Panc1 (cell line): ENCODE measurements at regions of chr2 and their contacts with region 1.

Region 1: DNA sequence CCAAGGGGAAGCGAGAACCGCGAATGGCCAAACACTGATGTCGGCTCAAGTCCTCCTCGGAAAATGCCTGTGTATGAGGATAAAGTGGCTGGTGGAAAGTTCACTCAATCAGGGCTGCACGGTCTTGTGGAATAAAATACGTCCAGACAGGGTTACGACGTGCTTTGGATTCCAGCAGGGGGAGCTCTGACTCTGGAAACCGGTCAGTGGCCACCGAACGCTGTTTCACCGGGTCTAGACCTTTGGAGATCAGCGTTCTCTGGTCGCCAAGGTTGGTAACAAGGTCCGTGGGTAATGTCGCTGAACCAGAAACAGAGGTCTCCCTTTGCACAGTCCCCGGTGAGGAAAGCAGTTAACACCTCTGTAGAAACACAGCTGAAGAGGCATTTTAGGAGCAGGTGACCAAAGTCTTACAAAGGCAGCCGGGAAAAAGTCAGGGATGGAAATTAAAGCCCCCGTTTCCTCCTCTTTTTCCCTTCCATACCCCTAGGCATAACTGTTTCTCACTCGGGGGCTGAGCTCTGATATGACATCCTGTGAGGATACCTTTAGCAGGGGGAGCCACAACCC is 47.8 kb downstream of the CDCA7 start:
- DNase-seq: peak; percentile 66
- ATAC-seq: peak; percentile 98
- H3K4me3 ChIP-seq: peak overlapping the region; percentile 28 to 49
- H3K27ac ChIP-seq: peak overlapping the region; percentile 72
- H3K4me1 ChIP-seq: peaks cover 21% of the 10 kb centered on the region; the same call in 1 of the 2 replicates
- H3K27me3 ChIP-seq: no peaks in the 10 kb centered on the region
- CTCF ChIP-seq: peak; percentile 90

Region 2: GRCh38 chr2:173448938-173449471 is 46.5 kb after region 1 on chr2:
- CTCF ChIA-PET with region 1: interaction called, 18 read pairs
- POLR2A ChIA-PET with region 1: no interaction called
- in situ Hi-C with region 1: no loop called
- intact Hi-C with region 1: loop called (anchors 2 kb)
- DNase-seq: peak; percentile 55
- ATAC-seq: peak; percentile 98
- H3K4me3 ChIP-seq: peak overlapping the region; percentile 41 to 64
- H3K27ac ChIP-seq: peak overlapping the region; percentile 89
- H3K4me1 ChIP-seq: no peaks in the 10 kb centered on the region
- H3K27me3 ChIP-seq: no peaks in the 10 kb centered on the region
- CTCF ChIP-seq: peak; percentile 94

Region 3: GRCh38 chr2:173571021-173571882 is 168.8 kb after region 1 on chr2:
- CTCF ChIA-PET with region 1: no interaction called
- POLR2A ChIA-PET with region 1: no interaction called
- in situ Hi-C with region 1: no loop called
- intact Hi-C with region 1: loop called (anchors 1 kb)
- DNase-seq: peak; percentile 30
- ATAC-seq: peak; percentile 89
- H3K4me3 ChIP-seq: peak overlapping the region in 1 of 2 experiments; percentile 36; a peak in 2 of 4 replicates
- H3K27ac ChIP-seq: peak overlapping the region; percentile 74
- H3K4me1 ChIP-seq: peaks cover 13% of the 10 kb centered on the region
- H3K27me3 ChIP-seq: no peaks in the 10 kb centered on the region
- CTCF ChIP-seq: peak; percentile 73

Region 4: DNA sequence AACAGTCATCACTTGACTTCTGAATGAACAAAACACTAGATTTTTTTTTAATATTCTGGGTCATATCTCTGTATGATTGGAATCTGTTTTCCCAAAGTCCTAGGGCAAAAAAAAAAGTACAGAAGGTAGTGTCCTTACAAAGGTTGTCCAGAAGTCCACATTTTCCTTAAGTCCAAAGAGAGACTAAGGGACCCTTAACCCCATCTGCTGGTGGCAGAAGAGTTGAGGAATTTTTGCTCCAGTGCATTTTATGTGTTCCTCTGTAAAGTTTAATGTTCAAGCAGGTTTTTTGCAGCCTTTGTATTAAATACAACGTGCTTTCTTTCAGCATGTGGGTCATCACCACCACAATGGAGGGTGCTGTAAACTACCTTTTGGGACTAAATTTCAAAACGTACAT is 346.8 kb after region 1 on chr2:
- CTCF ChIA-PET with region 1: no interaction called
- POLR2A ChIA-PET with region 1: no interaction called
- in situ Hi-C with region 1: no loop called
- intact Hi-C with region 1: loop called (anchors 5 kb)
- DNase-seq: peak; percentile 15
- ATAC-seq: no peak
- H3K4me3 ChIP-seq: no peak overlapping the region
- H3K27ac ChIP-seq: no peak overlapping the region
- H3K4me1 ChIP-seq: peaks cover 4% of the 10 kb centered on the region; the same call in 1 of the 2 replicates
- H3K27me3 ChIP-seq: no peaks in the 10 kb centered on the region
- CTCF ChIP-seq: peak; percentile 53; the same call in 1 of the 2 replicates

Region 5: GRCh38 chr2:174341286-174341994 is 939.0 kb after region 1 on chr2:
- CTCF ChIA-PET with region 1: interaction called, 7 read pairs
- POLR2A ChIA-PET with region 1: no interaction called
- in situ Hi-C with region 1: no loop called
- intact Hi-C with region 1: loop called (anchors 2 kb)
- DNase-seq: peak; percentile 41
- ATAC-seq: peak; percentile 93
- H3K4me3 ChIP-seq: peak overlapping the region; percentile 36 to 55
- H3K27ac ChIP-seq: no peak overlapping the region
- H3K4me1 ChIP-seq: peaks cover 10% of the 10 kb centered on the region
- H3K27me3 ChIP-seq: no peaks in the 10 kb centered on the region
- CTCF ChIP-seq: peak; percentile 98